Heart right ventricle (tissue), 16 donors: ENCODE measurements at regions of chr17 and their contacts with region 1.

Region 1: GRCh38 chr17:74245145-74245831 is 28.7 kb upstream of the DNAI2 start:
- DNase-seq: no peak
- ATAC-seq: no peak
- H3K4me3 ChIP-seq: no peak overlapping the region
- H3K27ac ChIP-seq: no peak overlapping the region
- H3K4me1 ChIP-seq: peaks cover 14 to 48% (median 38%) of the 10 kb centered on the region in 9 donors
- H3K27me3 ChIP-seq: no peaks in the 10 kb centered on the region
- CTCF ChIP-seq: no peak

Region 2: DNA sequence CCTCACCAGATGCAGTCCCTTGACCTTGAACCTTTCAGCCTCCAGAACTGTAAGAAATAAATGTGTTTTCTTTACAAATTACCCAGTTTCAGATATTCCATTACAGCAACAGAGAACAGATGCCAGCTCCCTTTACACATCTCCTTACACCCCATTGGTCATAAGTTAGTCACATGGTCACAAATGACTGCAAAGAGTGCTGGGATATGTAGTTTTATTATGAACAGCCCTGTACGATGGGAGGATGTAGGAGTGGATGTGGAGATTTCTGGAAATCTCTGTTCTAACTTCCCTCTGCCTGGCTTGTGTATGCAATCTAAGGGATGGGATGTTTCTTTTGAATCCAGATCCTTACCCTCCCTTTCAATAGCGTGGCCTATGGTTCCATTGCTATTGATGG is 55.1 kb before region 1 on chr17:
- intact Hi-C with region 1: no loop called
- DNase-seq: no peak
- ATAC-seq: peak in 7 of 8 donors; percentile 70 to 87 (median 80)
- H3K4me3 ChIP-seq: no peak overlapping the region
- H3K27ac ChIP-seq: no peak overlapping the region
- H3K4me1 ChIP-seq: peaks cover 0 to 11% (median 0%) of the 10 kb centered on the region in 9 donors
- H3K27me3 ChIP-seq: peaks cover 4 to 46% (median 16%) of the 10 kb centered on the region in 7 donors
- CTCF ChIP-seq: no peak

Region 3: DNA sequence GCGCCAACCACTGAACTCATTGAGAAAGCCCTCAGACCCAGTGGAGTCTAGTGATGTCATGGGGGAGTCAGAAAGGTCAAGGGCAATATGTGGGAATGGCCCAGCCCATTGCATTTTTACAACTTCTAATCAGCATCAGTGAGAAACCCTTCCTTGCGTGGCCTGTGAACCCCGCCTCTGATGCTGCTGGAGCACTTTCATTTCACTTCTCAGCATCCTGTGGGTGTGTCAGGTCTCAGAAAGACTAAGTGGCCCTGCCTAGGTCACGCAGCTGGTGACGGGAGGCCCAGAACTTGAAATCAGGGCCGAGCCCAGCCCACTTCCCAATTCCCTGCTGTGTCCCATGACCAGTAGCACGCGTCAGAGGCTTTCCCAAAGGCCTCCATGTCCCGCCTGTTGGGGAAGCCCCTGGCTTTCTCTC is 34.8 kb after region 1 on chr17:
- intact Hi-C with region 1: loop called in 1 of 10 experiments (anchors 5 kb)
- DNase-seq: no peak
- ATAC-seq: peak in 3 of 8 donors; percentile 4 to 24 (median 19)
- H3K4me3 ChIP-seq: no peak overlapping the region
- H3K27ac ChIP-seq: peak overlapping the region in 1 of 10 donors; percentile 80
- H3K4me1 ChIP-seq: peaks cover 0 to 50% (median 21%) of the 10 kb centered on the region in 9 donors
- H3K27me3 ChIP-seq: peaks cover 0 to under 1% (median 0%) of the 10 kb centered on the region in 7 donors
- CTCF ChIP-seq: no peak